AG04449 (cell line): ENCODE measurements at regions of chr1 and their contacts with region 1.

Region 1: DNA sequence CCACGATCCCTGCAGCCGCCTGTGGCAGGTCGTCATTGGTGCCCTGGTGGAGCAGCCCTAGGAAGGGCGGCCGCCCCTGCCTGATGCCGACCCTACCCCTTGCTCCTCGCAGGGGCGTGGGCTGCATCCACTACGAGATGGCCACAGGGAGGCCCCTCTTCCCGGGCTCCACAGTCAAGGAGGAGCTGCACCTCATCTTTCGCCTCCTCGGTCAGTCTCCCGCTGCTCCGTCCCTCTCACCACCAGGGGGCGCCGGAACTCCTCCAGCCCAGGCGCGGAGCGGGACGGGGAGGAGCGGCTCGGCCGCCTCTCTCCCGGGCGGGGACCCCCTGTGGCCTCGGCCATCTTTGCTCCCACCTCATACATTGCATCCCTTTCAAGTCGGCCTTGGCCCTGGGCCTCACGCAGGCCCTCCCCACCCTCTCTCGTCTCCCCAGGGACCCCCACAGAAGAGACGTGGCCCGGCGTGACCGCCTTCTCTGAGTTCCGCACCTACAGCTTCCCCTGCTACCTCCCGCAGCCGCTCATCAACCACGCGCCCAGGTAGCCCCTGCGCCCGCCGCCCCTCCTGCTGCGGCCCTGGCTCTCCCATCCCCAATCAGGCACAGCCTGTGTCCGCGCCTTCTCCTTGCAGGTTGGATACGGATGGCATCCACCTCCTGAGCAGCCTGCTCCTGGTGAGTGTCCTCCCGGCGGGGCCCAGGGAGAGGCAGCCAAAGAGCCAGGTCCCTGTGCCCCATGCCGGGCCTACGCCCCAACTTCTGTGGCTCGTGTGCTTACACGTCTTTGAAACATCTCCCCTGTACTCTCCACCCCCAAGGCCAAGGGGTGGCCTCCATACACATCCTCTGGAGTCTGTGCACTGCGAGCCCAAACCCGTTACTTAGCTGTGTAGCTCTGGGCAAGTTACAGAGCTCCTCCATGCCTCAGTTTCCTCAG is 24.7 kb downstream of the CDK18 start:
- DNase-seq: no peak
- H3K4me3 ChIP-seq: peak overlapping the region; percentile 45
- CTCF ChIP-seq: peak; percentile 93

Region 2: DNA sequence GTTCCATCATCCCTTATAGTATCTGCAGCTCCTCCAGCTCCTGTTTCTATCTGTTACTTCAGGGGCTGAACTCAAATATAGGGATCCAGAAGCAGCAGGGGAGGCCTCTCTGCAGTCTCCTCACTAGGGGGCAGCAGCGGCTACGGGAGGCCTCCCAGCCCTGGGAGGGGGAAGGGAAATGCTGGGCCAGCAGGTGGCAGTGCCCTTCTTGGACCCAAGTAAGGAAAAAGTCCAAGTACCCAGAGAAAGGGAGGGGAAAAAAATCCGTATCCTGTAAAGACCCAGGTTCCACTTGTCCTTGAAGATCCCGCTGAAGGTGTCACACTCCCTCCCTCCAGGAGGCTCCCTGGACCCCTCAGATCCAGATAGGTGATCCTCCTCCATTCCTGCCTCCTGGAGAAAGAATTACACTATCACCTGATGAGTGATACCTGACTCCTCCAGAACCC is 193.5 kb before region 1 on chr1:
- CTCF ChIA-PET with region 1: interaction called, 240 read pairs
- POLR2A ChIA-PET with region 1: no interaction called
- DNase-seq: no peak
- H3K4me3 ChIP-seq: no peak overlapping the region
- CTCF ChIP-seq: peak; percentile 99

Region 3: DNA sequence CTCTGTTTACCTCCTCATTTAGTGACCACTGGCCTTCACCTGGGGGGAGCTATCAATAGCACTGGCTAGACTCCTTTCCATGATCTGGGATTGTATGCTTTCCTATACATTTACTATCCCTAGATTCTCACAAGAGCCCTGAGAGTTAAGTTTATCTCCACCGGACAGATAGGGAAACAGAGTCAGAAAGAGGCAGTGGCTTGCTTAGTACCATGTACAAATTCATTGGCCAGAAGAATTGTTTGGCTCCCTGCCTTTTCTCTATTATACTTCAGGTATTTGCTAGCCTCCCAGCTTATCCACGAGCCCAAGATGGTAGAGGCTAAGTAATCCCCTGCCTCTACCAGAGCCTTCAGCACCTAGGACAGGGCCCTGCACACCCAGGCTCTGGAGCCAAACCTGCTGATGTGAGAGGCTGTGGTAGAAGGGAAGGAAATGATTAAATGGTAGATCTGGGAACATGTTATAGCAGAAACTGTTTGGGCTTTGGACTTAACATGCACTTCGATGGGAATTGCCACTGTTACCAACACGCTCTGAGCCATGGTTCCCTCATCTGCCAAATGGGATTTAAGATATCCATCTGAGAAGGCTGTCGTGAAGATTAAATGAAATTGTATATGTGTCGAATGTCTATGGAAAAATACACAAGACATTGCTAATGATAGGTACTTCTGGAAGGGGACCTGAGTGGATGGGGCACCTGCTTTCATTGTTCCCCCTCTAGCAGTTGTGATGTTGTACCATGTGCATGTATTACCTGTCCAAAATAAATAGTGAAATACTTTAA is 70.2 kb before region 1 on chr1:
- CTCF ChIA-PET with region 1: no interaction called
- POLR2A ChIA-PET with region 1: no interaction called
- DNase-seq: no peak
- H3K4me3 ChIP-seq: no peak overlapping the region
- CTCF ChIP-seq: no peak

Region 4: DNA sequence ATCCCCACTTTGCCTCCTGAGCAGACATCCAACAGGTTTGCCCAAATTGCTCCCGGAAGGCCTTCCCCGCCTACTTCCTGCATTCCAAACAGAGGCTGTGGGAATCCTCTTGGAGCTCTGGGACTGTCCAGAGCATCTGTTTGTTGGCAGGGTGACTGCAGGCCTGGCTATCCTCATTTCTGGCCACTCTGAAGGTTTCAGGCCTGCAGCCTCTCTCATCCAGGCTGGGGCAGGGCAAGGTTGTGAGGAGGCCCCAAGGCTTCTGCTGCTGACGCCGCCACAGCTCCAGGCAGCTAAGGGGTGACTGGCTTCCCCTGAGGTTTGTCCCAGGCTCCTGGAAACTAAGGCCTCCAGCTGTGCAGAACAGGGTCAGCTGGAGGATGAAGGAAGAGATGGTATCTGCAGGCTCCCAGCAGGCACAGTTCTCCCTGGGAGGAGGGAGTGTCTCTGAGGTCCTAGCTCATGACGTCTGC is 13.3 kb before region 1 on chr1:
- CTCF ChIA-PET with region 1: interaction called, 114 read pairs
- POLR2A ChIA-PET with region 1: no interaction called
- DNase-seq: no peak
- H3K4me3 ChIP-seq: no peak overlapping the region
- CTCF ChIP-seq: no peak

Region 5: DNA sequence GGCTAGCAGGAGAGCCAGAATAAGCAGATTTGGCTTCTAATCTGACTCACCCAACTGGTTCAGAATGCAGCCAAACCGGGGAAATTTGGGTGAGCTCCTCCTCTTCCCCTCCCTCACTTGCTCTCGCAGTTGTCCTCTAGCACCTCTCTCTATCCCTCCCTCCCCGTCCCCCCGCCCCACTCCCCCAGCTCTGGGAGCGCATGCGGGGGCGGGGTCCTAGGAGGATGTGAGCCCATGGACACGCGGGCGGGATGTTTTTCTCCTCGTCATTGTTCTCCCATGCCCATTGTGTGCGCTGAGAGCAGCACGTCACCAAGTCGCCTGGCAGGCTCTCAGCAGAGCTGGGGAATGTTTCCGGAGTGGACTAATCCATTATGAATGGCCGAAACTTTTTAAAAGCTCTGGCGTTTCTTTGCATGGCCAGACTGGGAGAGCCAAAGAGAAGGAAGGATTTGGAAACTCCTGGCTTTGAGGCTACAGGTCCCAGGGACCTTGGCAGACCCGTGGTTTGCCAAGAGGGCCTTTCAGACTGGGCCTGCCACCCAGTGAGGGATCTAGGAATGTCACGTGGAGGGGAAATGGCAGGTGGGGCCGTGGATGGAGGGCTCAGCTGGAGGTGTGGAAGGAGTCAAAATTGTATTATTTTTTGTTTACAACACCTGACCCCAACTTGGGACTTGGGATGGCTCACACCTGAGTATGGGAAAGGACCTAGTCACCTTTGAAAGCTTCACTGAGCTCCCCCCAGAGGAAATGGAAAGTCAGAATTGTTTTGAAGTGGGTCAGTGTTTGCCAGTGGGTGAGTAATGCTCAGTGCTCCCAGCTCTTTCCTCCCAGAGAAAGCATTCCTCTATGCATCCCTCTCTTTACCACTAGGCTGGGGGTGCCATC is 14.5 kb after region 1 on chr1:
- CTCF ChIA-PET with region 1: interaction called, 53 read pairs
- POLR2A ChIA-PET with region 1: interaction called, 3 read pairs
- DNase-seq: peak; percentile 21
- H3K4me3 ChIP-seq: peak overlapping the region; percentile 41
- CTCF ChIP-seq: no peak

Region 6: GRCh38 chr1:205631727-205632373 is 102.7 kb after region 1 on chr1 and contains the start of gene ELK4:
- CTCF ChIA-PET with region 1: interaction called, 35 read pairs
- POLR2A ChIA-PET with region 1: no interaction called
- DNase-seq: peak; percentile 85
- H3K4me3 ChIP-seq: peak within 1 kb of the TSS; percentile 74
- CTCF ChIP-seq: peak; percentile 78